GM12878 (cell line): ENCODE measurements at regions of chr11 and their contacts with region 1.

Region 1: GRCh38 chr11:727859-728748 is 19.2 kb upstream of the TALDO1 start:
- DNase-seq: no peak
- ATAC-seq: peak; percentile 89
- H3K4me3 ChIP-seq: no peak overlapping the region
- H3K27ac ChIP-seq: no peak overlapping the region
- H3K4me1 ChIP-seq: peaks cover 6% of the 10 kb centered on the region
- H3K27me3 ChIP-seq: no peaks in the 10 kb centered on the region
- CTCF ChIP-seq: peak; percentile 93 to 100 (median 100); a peak in 5 of 6 replicates
- EP300 ChIP-seq: no peak
- POLR2A ChIP-seq: 0 out of 2 replicates have a peak, but pooled peaks have one; percentile 7
- RAD21 ChIP-seq: peak; percentile 70

Region 2: GRCh38 chr11:560305-561147 is 167.6 kb before region 1 on chr11 and contains the starts of genes LMNTD2 and RASSF7:
- CTCF ChIA-PET with region 1: interaction called, 54 read pairs
- POLR2A ChIA-PET with region 1: interaction called, 6 read pairs
- RAD21 ChIA-PET with region 1: interaction called, 22 read pairs
- SMC1A ChIA-PET with region 1: interaction called, 6 read pairs
- in situ Hi-C with region 1: no loop called
- intact Hi-C with region 1: loop called (anchors 2 kb)
- DNase-seq: peak; percentile 60
- ATAC-seq: peak; percentile 96
- H3K4me3 ChIP-seq: peak within 1 kb of the TSS; percentile 89
- H3K27ac ChIP-seq: peak within 1 kb of the TSS; percentile 55
- H3K4me1 ChIP-seq: peaks cover 5% of the 10 kb centered on the region
- H3K27me3 ChIP-seq: peaks cover 0 to 5% of the 10 kb centered on the region in 2 experiments; a peak in 2 of 4 replicates
- CTCF ChIP-seq: no peak
- EP300 ChIP-seq: no peak
- POLR2A ChIP-seq: peak; percentile 83
- RAD21 ChIP-seq: no peak
- polyA plus RNA-seq, gene LMNTD2: not detected
- polyA plus RNA-seq, gene RASSF7: 0.39 to 1.0 TPM

Region 3: GRCh38 chr11:587978-588380 is 140.1 kb before region 1 on chr11:
- CTCF ChIA-PET with region 1: no interaction called
- POLR2A ChIA-PET with region 1: no interaction called
- RAD21 ChIA-PET with region 1: no interaction called
- SMC1A ChIA-PET with region 1: no interaction called
- in situ Hi-C with region 1: no loop called
- intact Hi-C with region 1: no loop called
- DNase-seq: no peak
- ATAC-seq: no peak
- H3K4me3 ChIP-seq: no peak overlapping the region
- H3K27ac ChIP-seq: no peak overlapping the region
- H3K4me1 ChIP-seq: no peaks in the 10 kb centered on the region
- H3K27me3 ChIP-seq: no peaks in the 10 kb centered on the region
- CTCF ChIP-seq: no peak
- EP300 ChIP-seq: no peak
- POLR2A ChIP-seq: no peak
- RAD21 ChIP-seq: no peak

Region 4: DNA sequence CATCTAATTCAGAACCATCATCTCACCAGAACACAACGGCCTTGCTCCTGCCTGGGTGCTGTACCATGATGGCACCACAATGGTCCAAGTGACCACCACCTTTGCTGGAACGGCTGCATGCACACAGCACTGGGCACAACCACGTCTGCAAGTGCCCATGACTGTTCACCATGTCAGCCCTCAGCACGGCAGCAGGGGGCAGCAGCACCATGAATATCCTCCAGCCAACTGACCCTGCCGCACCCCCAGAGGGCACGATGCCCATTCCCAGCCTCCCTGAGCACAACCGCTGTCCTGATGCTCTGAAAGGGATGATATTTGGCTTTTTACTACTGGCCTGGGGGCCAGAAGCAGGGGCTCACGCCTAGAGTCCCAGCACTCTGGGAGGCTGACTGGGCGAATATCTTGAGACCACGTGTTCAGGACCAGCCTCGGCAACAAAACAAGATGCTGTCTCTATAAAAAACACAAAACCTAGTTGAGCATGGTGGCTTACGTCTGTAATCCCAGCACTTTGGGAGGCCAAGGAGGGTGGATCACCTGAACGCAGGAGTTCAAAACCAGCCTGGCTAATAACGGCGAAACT is 65.3 kb before region 1 on chr11:
- CTCF ChIA-PET with region 1: interaction called, 91 read pairs
- POLR2A ChIA-PET with region 1: no interaction called
- RAD21 ChIA-PET with region 1: interaction called, 15 read pairs
- SMC1A ChIA-PET with region 1: interaction called, 8 read pairs
- in situ Hi-C with region 1: loop called (anchors 10 kb)
- intact Hi-C with region 1: loop called (anchors 2 kb)
- DNase-seq: no peak
- ATAC-seq: peak; percentile 96
- H3K4me3 ChIP-seq: no peak overlapping the region
- H3K27ac ChIP-seq: no peak overlapping the region
- H3K4me1 ChIP-seq: peaks cover 13% of the 10 kb centered on the region
- H3K27me3 ChIP-seq: no peaks in the 10 kb centered on the region
- CTCF ChIP-seq: peak; percentile 72 to 80 (median 75)
- EP300 ChIP-seq: no peak
- POLR2A ChIP-seq: no peak
- RAD21 ChIP-seq: peak; percentile 59

Region 5: GRCh38 chr11:695538-696248 is 32.4 kb before region 1 on chr11 and contains the start of gene TMEM80:
- CTCF ChIA-PET with region 1: interaction called, 127 read pairs
- POLR2A ChIA-PET with region 1: interaction called, 72 read pairs
- RAD21 ChIA-PET with region 1: interaction called, 112 read pairs
- SMC1A ChIA-PET with region 1: interaction called, 11 read pairs
- in situ Hi-C with region 1: no loop called
- intact Hi-C with region 1: no loop called
- DNase-seq: peak; percentile 68
- ATAC-seq: peak; percentile 86
- H3K4me3 ChIP-seq: peak within 1 kb of the TSS; percentile 83
- H3K27ac ChIP-seq: peak within 1 kb of the TSS; percentile 96
- H3K4me1 ChIP-seq: peaks cover 24% of the 10 kb centered on the region
- H3K27me3 ChIP-seq: no peaks in the 10 kb centered on the region
- CTCF ChIP-seq: no peak
- EP300 ChIP-seq: no peak
- POLR2A ChIP-seq: peak; percentile 89
- RAD21 ChIP-seq: no peak
- polyA plus RNA-seq, gene TMEM80: 6.7 to 8.8 TPM

Region 6: GRCh38 chr11:765025-765801 is 37.1 kb after region 1 on chr11:
- CTCF ChIA-PET with region 1: interaction called, 3 read pairs
- POLR2A ChIA-PET with region 1: no interaction called
- RAD21 ChIA-PET with region 1: interaction called, 3 read pairs
- SMC1A ChIA-PET with region 1: interaction called, 5 read pairs
- in situ Hi-C with region 1: no loop called
- intact Hi-C with region 1: loop called (anchors 1 kb)
- DNase-seq: no peak
- ATAC-seq: peak; percentile 86
- H3K4me3 ChIP-seq: no peak overlapping the region
- H3K27ac ChIP-seq: no peak overlapping the region
- H3K4me1 ChIP-seq: no peaks in the 10 kb centered on the region
- H3K27me3 ChIP-seq: no peaks in the 10 kb centered on the region
- CTCF ChIP-seq: peak; percentile 64 to 84 (median 72)
- EP300 ChIP-seq: no peak
- POLR2A ChIP-seq: peak; percentile 62
- RAD21 ChIP-seq: peak; percentile 64